Right cardiac atrium (tissue), 5 donors: ENCODE measurements at regions of chr1 and their contacts with region 1.

Region 1: GRCh38 chr1:6330410-6330911 is 63.1 kb downstream of the ACOT7 start:
- DNase-seq: peak in 1 of 3 donors; percentile 39
- ATAC-seq: peak in 1 of 2 donors; percentile 10
- H3K4me3 ChIP-seq: no peak overlapping the region
- H3K27ac ChIP-seq: no peak overlapping the region
- H3K4me1 ChIP-seq: peaks cover 2% of the 10 kb centered on the region
- H3K27me3 ChIP-seq: no peaks in the 10 kb centered on the region

Region 2: GRCh38 chr1:6041432-6042062 is 288.9 kb before region 1 on chr1:
- intact Hi-C with region 1: loop called in 1 of 4 experiments (anchors 10 kb)
- DNase-seq: peak in 2 of 3 donors; percentile 71 to 77
- ATAC-seq: peak in 1 of 2 donors; percentile 42
- H3K4me3 ChIP-seq: no peak overlapping the region
- H3K27ac ChIP-seq: no peak overlapping the region
- H3K4me1 ChIP-seq: no peaks in the 10 kb centered on the region
- H3K27me3 ChIP-seq: no peaks in the 10 kb centered on the region

Region 3: GRCh38 chr1:6269720-6270400 is 60.6 kb before region 1 on chr1:
- intact Hi-C with region 1: loop called in 1 of 4 experiments (anchors 5 kb)
- DNase-seq: peak in 1 of 3 donors; percentile 43
- ATAC-seq: no peak
- H3K4me3 ChIP-seq: no peak overlapping the region
- H3K27ac ChIP-seq: no peak overlapping the region
- H3K4me1 ChIP-seq: no peaks in the 10 kb centered on the region
- H3K27me3 ChIP-seq: no peaks in the 10 kb centered on the region